Ascending aorta (tissue), 2 donors: ENCODE measurements at regions of chr2 and their contacts with region 1.

Region 1: DNA sequence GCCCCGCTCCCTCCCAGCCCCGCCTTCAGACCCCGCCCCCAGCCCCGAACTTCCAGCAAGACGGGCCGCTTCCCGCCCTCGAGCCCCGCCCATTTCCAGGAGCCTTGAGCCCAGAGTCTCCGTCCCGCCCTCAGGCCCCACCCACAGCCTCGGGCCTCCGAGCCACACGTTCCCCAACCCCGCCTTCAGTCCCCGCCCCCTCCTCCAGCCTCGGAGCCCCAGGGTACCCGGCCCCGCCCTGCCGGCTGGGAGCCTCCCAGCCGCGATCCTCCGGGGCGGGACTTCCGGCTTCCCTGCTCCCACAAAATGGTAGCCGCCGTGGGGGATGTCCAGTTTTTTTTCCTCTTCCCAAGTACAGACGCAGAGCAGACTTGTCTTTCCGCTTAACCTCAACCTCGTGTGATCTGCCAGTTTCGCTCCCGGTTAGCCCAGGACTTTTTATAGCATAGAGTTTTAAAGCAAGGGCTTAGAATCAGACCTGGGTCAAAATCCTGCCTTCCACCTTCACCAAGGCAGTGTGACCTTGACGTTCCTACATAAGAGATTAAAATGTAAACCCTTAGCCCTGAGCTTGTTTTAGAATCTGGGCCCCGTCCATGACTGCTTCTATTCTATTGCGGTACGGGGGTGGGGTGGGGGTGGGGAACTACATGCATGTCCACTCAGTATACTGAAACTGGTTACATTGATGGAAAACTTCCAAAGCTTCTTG is 435 bp upstream of the GPR155 start:
- DNase-seq: peak; percentile 97 to 100
- H3K4me3 ChIP-seq: peak overlapping the region; percentile 76 to 97
- H3K27ac ChIP-seq: peak overlapping the region; percentile 61 to 71
- H3K4me1 ChIP-seq: peaks cover 0 to 6% of the 10 kb centered on the region in 2 donors
- H3K27me3 ChIP-seq: no peaks in the 10 kb centered on the region
- CTCF ChIP-seq: no peak

Region 2: GRCh38 chr2:173982918-173983317 is 504.3 kb before region 1 on chr2:
- intact Hi-C with region 1: loop called (anchors 5 kb)
- DNase-seq: no peak
- H3K4me3 ChIP-seq: peak overlapping the region in 1 of 2 donors; percentile 22
- H3K27ac ChIP-seq: peak overlapping the region; percentile 79 to 83
- H3K4me1 ChIP-seq: peaks cover 13 to 52% of the 10 kb centered on the region in 2 donors
- H3K27me3 ChIP-seq: no peaks in the 10 kb centered on the region
- CTCF ChIP-seq: no peak

Region 3: GRCh38 chr2:174341286-174341994 is 145.8 kb before region 1 on chr2:
- intact Hi-C with region 1: loop called (anchors 5 kb)
- DNase-seq: peak in 1 of 2 donors; percentile 91
- H3K4me3 ChIP-seq: peak overlapping the region; percentile 5 to 18
- H3K27ac ChIP-seq: no peak overlapping the region
- H3K4me1 ChIP-seq: peaks cover 17 to 27% of the 10 kb centered on the region in 2 donors
- H3K27me3 ChIP-seq: peaks cover 62% of the 10 kb centered on the region
- CTCF ChIP-seq: peak; percentile 85 to 98 (median 97)

Region 4: DNA sequence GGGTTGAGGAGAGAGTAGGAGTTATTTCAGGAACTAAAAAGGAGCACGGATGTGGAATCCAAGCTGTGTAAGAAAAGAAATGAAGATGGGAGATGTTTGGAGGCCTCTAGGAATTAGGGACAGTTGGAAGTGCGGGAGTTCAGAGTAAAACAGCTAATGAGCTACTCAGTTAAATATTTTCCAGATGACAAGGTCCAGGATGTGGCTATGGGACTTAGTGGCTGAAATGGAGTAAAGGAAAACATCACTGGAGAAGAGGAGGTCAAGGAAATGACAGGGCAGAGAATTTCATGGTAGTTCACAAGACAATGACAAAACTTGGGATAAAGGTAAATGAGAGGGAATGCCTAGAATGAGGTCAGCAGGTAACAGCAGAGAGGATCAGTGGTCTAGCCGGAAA is 13.5 kb before region 1 on chr2:
- intact Hi-C with region 1: no loop called
- DNase-seq: no peak
- H3K4me3 ChIP-seq: no peak overlapping the region
- H3K27ac ChIP-seq: no peak overlapping the region
- H3K4me1 ChIP-seq: no peaks in the 10 kb centered on the region
- H3K27me3 ChIP-seq: no peaks in the 10 kb centered on the region
- CTCF ChIP-seq: no peak

Region 5: DNA sequence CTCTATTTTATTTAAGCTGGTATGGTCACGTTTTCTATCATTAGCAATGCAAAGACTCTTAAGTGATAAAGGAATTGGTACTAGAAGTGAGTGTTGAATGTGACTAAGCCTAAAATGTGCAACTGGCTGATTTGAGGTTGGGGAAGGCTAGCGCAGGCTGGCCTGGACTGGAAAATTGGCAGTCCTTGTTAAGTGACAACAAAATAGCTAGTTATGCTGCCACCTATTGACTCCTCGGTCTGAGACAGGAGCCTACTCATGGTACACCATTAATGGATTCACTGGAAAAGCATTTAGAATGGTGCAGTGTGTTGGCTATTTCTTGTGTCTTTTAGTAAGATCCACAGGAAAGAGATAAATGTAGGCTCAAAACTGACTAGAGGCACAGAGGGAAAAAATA is 116.0 kb after region 1 on chr2:
- intact Hi-C with region 1: loop called (anchors 5 kb)
- DNase-seq: peak; percentile 35 to 83
- H3K4me3 ChIP-seq: no peak overlapping the region
- H3K27ac ChIP-seq: no peak overlapping the region
- H3K4me1 ChIP-seq: peaks cover 3 to 17% of the 10 kb centered on the region in 2 donors
- H3K27me3 ChIP-seq: no peaks in the 10 kb centered on the region
- CTCF ChIP-seq: peak; percentile 60 to 73 (median 63)

Region 6: DNA sequence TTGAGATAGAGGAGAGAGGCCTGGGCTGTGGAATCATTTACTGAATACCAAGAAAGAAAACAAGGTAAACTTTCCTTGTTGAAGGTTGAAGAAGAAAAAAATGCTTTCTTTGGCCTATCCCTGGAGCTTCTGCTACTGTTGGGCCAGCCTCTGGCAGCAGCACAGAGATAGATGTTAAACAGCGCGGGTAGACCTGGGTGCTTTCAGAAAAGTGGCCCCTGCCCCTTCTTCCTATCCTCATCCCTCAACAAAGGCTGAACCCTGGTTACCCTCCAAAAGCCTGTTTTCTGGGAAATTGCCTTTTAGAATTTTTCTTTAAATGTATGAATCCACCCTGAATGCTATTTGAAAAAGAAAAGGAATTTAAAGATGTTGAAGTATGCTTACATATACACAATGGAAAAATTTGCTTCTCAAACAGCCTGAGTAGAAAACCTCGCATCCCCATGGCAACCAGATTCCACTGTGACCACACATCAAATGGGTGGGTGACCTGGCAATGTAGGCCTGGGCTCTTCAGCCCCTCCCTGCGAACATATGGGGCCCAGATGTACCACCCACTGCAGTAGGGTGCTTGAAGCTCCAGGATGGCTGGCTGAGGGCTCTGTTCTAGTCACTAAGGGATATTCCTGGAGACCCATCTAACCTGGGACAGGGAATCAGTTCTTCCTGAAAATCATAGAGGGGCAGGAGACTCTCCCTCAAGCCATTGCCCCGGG is 300.4 kb after region 1 on chr2:
- intact Hi-C with region 1: no loop called
- DNase-seq: no peak
- H3K4me3 ChIP-seq: no peak overlapping the region
- H3K27ac ChIP-seq: no peak overlapping the region
- H3K4me1 ChIP-seq: no peaks in the 10 kb centered on the region
- H3K27me3 ChIP-seq: no peaks in the 10 kb centered on the region
- CTCF ChIP-seq: no peak

Region 7: GRCh38 chr2:175004980-175005732 is 517.9 kb after region 1 on chr2 and contains the start of gene CHN1:
- intact Hi-C with region 1: loop called (anchors 5 kb)
- DNase-seq: peak in 1 of 2 donors; percentile 88
- H3K4me3 ChIP-seq: peak within 1 kb of the TSS; percentile 86 to 96
- H3K27ac ChIP-seq: peak within 1 kb of the TSS; percentile 88 to 96
- H3K4me1 ChIP-seq: peaks cover 0 to 6% of the 10 kb centered on the region in 2 donors
- H3K27me3 ChIP-seq: no peaks in the 10 kb centered on the region
- CTCF ChIP-seq: peak in 1 of 3 experiments; percentile 16
- total RNA-seq, gene CHN1: 7.8 TPM